Dendritic cell treated with granulocyte-macrophage colony-stimulating factor and Interleukin-4, amounts not matched to agents 40 ng/mL and 50 ng/mL, for 4 days (primary cell): ENCODE measurements at regions of chr5 and their contacts with region 1.

Region 1: GRCh38 chr5:112707187-112708102 is 30.2 kb upstream of the APC start:
- H3K4me3 Mint-ChIP-seq: peak overlapping the region; percentile 97
- H3K27ac Mint-ChIP-seq: peak overlapping the region; percentile 93
- H3K4me1 Mint-ChIP-seq: peaks cover 57% of the 10 kb centered on the region
- H3K27me3 Mint-ChIP-seq: no peaks in the 10 kb centered on the region

Region 2: GRCh38 chr5:112742424-112742823 is 35.0 kb after region 1 on chr5:
- intact Hi-C with region 1: loop called (anchors 5 kb)
- H3K4me3 Mint-ChIP-seq: no peak overlapping the region
- H3K27ac Mint-ChIP-seq: no peak overlapping the region
- H3K4me1 Mint-ChIP-seq: peaks cover 22% of the 10 kb centered on the region
- H3K27me3 Mint-ChIP-seq: no peaks in the 10 kb centered on the region

Region 3: GRCh38 chr5:112976432-112977309 is 269.2 kb after region 1 on chr5 and contains the start of gene DCP2:
- intact Hi-C with region 1: loop called (anchors 5 kb)
- H3K4me3 Mint-ChIP-seq: peak within 1 kb of the TSS; percentile 99
- H3K27ac Mint-ChIP-seq: peak within 1 kb of the TSS; percentile 100
- H3K4me1 Mint-ChIP-seq: peaks cover 26% of the 10 kb centered on the region
- H3K27me3 Mint-ChIP-seq: no peaks in the 10 kb centered on the region